ENCODE measurements at regions of chr10 and their contacts with region 1.

Region 1: GRCh38 chr10:110425684-110426293 is 71.9 kb upstream of the DUSP5 start:
- DNase-seq: peak; percentile 79 to 91 (median 85)
- H3K4me3 ChIP-seq: no peak overlapping the region
- H3K4me3 Mint-ChIP-seq: peak overlapping the region in 1 of 2 donors; percentile 4
- H3K27ac ChIP-seq: peak overlapping the region in 1 of 2 donors; percentile 66
- H3K27ac Mint-ChIP-seq: peak overlapping the region; percentile 84 to 96 (median 89)
- H3K4me1 ChIP-seq: peaks cover 61 to 85% of the 10 kb centered on the region in 2 donors
- H3K4me1 Mint-ChIP-seq: peaks cover 81% of the 10 kb centered on the region
- H3K27me3 ChIP-seq: no peaks in the 10 kb centered on the region
- H3K27me3 Mint-ChIP-seq: peaks cover 3 to 9% (median 5%) of the 10 kb centered on the region in 3 donors
- CTCF ChIP-seq: no peak

Region 2: GRCh38 chr10:110368002-110368401 is 57.8 kb before region 1 on chr10:
- intact Hi-C with region 1: no loop called
- DNase-seq: peak in 1 of 3 donors; percentile 32
- H3K4me3 ChIP-seq: no peak overlapping the region
- H3K4me3 Mint-ChIP-seq: no peak overlapping the region
- H3K27ac ChIP-seq: no peak overlapping the region
- H3K27ac Mint-ChIP-seq: peak overlapping the region in 1 of 7 donors; percentile 42
- H3K4me1 ChIP-seq: no peaks in the 10 kb centered on the region
- H3K4me1 Mint-ChIP-seq: peaks cover 5% of the 10 kb centered on the region
- H3K27me3 ChIP-seq: no peaks in the 10 kb centered on the region
- H3K27me3 Mint-ChIP-seq: peaks cover 0 to 4% (median 0%) of the 10 kb centered on the region in 3 donors
- CTCF ChIP-seq: no peak

Region 3: DNA sequence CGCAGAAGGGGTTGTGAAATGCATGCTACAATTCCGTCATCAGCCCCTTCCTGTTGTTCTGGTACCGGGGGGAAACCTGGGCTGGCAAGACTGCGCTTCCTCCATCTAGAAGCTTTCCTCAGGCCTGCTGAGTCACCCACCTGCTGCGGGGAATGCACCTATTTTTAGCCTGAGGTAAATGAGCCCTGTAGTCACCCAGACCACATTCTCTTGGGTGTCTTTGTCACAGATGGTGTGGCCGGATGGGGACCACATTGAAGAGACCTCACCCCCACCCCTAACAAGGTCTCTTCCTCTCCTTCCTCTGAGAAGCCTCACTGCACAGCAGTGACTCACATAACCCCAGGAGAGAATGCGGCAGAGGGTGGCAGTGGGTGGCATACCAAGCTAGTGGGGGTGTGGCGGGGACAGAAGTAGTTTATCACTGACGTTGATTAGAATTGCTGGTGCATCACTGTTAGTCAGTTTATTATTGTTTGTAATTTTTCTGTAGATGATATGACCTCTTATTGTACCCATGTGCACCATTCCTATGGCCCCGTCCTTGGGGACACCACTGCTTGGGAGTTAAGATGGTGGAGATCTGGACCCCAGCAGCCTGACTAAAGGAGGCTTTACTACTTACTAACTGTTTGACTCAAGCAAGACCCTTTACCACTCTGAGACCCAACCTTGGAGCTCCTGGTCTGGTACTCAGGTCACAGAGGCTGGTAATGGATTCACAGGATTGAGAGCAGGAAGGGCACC is 11.1 kb before region 1 on chr10:
- intact Hi-C with region 1: loop called in 1 of 2 experiments (anchors 1 kb)
- DNase-seq: peak; percentile 79 to 98 (median 88)
- H3K4me3 ChIP-seq: peak overlapping the region in 1 of 3 experiments; percentile 35
- H3K4me3 Mint-ChIP-seq: peak overlapping the region; percentile 17 to 38
- H3K27ac ChIP-seq: peak overlapping the region; percentile 3 to 65
- H3K27ac Mint-ChIP-seq: peak overlapping the region; percentile 19 to 89 (median 72)
- H3K4me1 ChIP-seq: peaks cover 44 to 61% of the 10 kb centered on the region in 2 donors
- H3K4me1 Mint-ChIP-seq: peaks cover 62% of the 10 kb centered on the region
- H3K27me3 ChIP-seq: no peaks in the 10 kb centered on the region
- H3K27me3 Mint-ChIP-seq: peaks cover 1 to 12% (median 3%) of the 10 kb centered on the region in 3 donors
- CTCF ChIP-seq: no peak

Region 4: DNA sequence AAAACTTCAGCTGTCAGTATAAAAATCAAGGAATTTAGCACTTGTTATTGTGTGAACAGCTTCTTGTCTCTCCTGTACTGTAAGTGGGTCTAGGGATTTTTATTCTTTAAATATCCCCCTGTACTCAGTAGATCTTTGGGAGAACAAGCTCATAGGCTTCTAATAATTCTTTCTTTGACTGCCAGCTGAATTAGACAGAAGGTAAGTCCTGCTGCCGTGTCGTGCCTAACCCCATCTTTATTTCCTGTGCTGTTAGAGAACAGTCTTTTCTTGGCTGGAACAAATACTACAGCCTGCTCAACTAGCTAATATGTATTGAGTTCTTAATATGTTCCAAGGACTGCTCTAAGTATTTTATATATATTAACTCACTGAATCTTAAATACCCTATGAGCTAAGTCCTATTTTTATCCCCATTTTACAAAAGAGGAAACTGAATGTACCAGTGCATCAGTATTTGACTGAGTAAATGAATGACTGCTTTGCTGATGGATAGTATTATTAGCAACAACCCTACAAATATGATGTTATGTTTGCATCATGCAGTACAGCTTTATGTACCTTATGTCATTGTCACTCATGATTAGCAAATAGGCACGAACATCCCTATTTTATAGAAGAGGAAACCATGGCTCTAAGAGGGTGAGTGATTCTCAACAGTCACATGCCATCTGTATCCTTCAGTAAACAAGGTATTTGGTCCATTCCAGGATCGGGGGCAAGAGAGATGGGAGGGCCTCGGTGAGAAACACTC is 66.5 kb after region 1 on chr10:
- intact Hi-C with region 1: loop called (anchors 5 kb)
- DNase-seq: peak; percentile 79 to 89 (median 81)
- H3K4me3 ChIP-seq: no peak overlapping the region
- H3K4me3 Mint-ChIP-seq: no peak overlapping the region
- H3K27ac ChIP-seq: no peak overlapping the region
- H3K27ac Mint-ChIP-seq: peak overlapping the region; percentile 15 to 93 (median 84)
- H3K4me1 ChIP-seq: peaks cover 17% of the 10 kb centered on the region in 2 donors
- H3K4me1 Mint-ChIP-seq: peaks cover 31% of the 10 kb centered on the region
- H3K27me3 ChIP-seq: peaks cover 2 to 17% of the 10 kb centered on the region in 2 donors
- H3K27me3 Mint-ChIP-seq: peaks cover 31 to 42% (median 36%) of the 10 kb centered on the region in 3 donors
- CTCF ChIP-seq: no peak